AG04449 (cell line): ENCODE measurements at regions of chr1 and their contacts with region 1.

Region 1: DNA sequence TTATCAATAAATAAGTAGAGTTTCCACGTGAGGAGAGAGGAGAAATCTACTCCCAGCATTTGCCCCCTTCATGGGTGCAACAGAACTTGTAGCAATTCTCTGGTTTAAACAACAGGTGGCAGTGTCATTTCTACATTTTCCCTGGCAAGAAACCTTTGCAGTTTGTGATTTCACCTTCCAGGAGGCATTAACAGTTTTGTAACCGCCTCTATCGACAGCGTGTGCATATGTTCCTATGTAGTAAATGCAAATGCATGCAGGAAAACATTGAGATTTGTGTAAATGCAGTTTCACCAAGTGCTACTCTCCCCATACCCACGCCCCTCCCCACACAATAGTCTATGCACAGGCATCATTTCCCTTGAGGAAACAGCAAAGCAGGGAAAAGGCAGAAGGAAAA is 494.7 kb downstream of the SMYD3 start:
- DNase-seq: no peak
- H3K4me3 ChIP-seq: no peak overlapping the region
- CTCF ChIP-seq: peak; percentile 54

Region 2: GRCh38 chr1:245990315-245991022 is 21.9 kb before region 1 on chr1:
- CTCF ChIA-PET with region 1: no interaction called
- POLR2A ChIA-PET with region 1: no interaction called
- DNase-seq: no peak
- H3K4me3 ChIP-seq: no peak overlapping the region
- CTCF ChIP-seq: no peak

Region 3: DNA sequence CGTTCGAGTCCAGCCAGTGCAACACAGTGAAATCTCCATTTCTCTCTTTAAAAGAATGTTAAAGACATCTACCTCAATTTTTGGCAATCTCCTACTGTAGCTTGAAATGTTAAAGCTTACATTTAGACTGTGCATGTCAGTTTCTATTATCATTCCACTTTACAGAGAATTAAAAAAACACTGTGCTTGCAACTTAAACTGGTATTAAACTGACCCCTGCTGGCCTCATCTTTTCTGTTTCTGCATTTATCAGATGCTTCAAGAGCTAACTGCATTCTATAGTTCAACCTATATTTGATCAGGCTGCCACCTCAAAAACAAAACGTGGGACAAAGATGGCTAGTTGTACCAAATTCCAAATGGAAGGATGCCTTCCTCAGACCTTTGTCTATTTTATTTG is 268.2 kb after region 1 on chr1:
- CTCF ChIA-PET with region 1: interaction called, 15 read pairs
- POLR2A ChIA-PET with region 1: no interaction called
- DNase-seq: no peak
- H3K4me3 ChIP-seq: no peak overlapping the region
- CTCF ChIP-seq: peak; percentile 9

Region 4: GRCh38 chr1:246450611-246451251 is 438.4 kb after region 1 on chr1:
- CTCF ChIA-PET with region 1: interaction called, 44 read pairs
- POLR2A ChIA-PET with region 1: no interaction called
- DNase-seq: no peak
- H3K4me3 ChIP-seq: no peak overlapping the region
- CTCF ChIP-seq: peak; percentile 31